Adrenal gland (tissue), 19 donors: ENCODE measurements at regions of chr14 and their contacts with region 1.

Region 1: GRCh38 chr14:78022059-78022458 is 148.1 kb upstream of the NRXN3 start:
- DNase-seq: peak in 6 of 7 donors; percentile 38 to 64 (median 50)
- H3K4me3 ChIP-seq: no peak overlapping the region
- H3K27ac ChIP-seq: no peak overlapping the region
- H3K4me1 ChIP-seq: no peaks in the 10 kb centered on the region
- H3K27me3 ChIP-seq: no peaks in the 10 kb centered on the region
- CTCF ChIP-seq: peak in 5 of 6 experiments; percentile 16 to 45 (median 34)
- POLR2A ChIP-seq: no peak

Region 2: DNA sequence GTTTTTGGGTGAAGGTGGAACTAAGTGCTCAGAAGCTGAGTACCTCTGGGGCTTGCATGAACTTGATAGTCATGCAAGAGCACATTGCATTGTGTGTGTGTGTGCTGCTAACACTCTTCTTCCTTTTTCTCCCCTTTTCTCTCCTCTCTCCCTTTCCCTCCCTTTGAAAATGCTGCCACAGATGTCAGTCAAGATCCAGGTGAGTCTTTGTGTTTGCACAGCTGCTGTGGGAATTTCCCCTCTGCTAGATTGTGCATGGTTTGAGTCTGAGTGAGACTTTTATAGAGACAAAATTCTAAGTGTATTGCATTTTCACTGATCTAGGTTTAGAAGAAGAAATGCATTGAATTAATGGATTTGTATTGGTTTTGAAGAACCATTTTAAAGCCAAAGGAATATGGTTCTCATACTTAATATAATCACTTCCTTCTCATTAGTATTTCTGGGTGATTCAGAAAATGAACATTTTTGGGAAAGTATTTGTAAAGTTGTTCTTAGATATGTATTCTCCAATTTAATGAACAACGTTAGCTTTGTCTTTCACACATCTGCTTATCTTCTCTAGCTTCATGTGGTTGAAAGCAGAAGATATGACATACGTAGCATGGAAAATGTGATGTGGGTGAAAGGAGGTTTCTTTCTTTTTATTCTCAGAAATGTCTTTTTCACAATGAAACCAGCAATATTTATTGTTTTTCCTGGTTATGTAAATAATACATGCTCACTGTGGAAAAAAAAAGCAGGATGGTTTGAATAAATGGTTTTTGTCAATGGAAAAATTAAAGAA is 256.6 kb after region 1 on chr14:
- intact Hi-C with region 1: no loop called
- DNase-seq: no peak
- H3K4me3 ChIP-seq: no peak overlapping the region
- H3K27ac ChIP-seq: no peak overlapping the region
- H3K4me1 ChIP-seq: no peaks in the 10 kb centered on the region
- H3K27me3 ChIP-seq: no peaks in the 10 kb centered on the region
- CTCF ChIP-seq: no peak
- POLR2A ChIP-seq: no peak

Region 3: GRCh38 chr14:78598041-78598920 is 576.2 kb after region 1 on chr14:
- intact Hi-C with region 1: loop called in 1 of 2 experiments (anchors 10 kb)
- DNase-seq: peak; percentile 24 to 68 (median 46)
- H3K4me3 ChIP-seq: no peak overlapping the region
- H3K27ac ChIP-seq: no peak overlapping the region
- H3K4me1 ChIP-seq: no peaks in the 10 kb centered on the region
- H3K27me3 ChIP-seq: no peaks in the 10 kb centered on the region
- CTCF ChIP-seq: peak; percentile 64 to 84 (median 79)
- POLR2A ChIP-seq: no peak